ENCODE measurements at regions of chrX and their contacts with region 1.

Region 1: GRCh38 chrX:24241822-24242648 is 71.8 kb downstream of the SUPT20HL2 start:
- DNase-seq: peak in 1 of 2 donors; percentile 11
- ATAC-seq: no peak
- H3K4me3 ChIP-seq: no peak overlapping the region
- H3K27ac ChIP-seq: peak overlapping the region; percentile 43 to 66 (median 54)
- H3K4me1 ChIP-seq: peaks cover 0 to 4% of the 10 kb centered on the region in 2 donors
- H3K27me3 ChIP-seq: no peaks in the 10 kb centered on the region
- CTCF ChIP-seq: peak in 4 of 5 experiments; percentile 13 to 51 (median 27)
- POLR2A ChIP-seq: no peak

Region 2: GRCh38 chrX:23742697-23743622 is 499.1 kb before region 1 on chrX and contains the start of gene ACOT9:
- in situ Hi-C with region 1: no loop called
- intact Hi-C with region 1: no loop called
- DNase-seq: peak; percentile 85 to 96
- ATAC-seq: peak; percentile 91 to 95
- H3K4me3 ChIP-seq: peak within 1 kb of the TSS; percentile 73 to 85 (median 82)
- H3K27ac ChIP-seq: peak within 1 kb of the TSS; percentile 91 to 96 (median 94)
- H3K4me1 ChIP-seq: no peaks in the 10 kb centered on the region
- H3K27me3 ChIP-seq: no peaks in the 10 kb centered on the region
- CTCF ChIP-seq: no peak
- POLR2A ChIP-seq: peak; percentile 78 to 81
- total RNA-seq, gene ACOT9: 12.3 to 21.9 (median 20.6) TPM

Region 3: GRCh38 chrX:24081661-24082264 is 160.3 kb before region 1 on chrX:
- in situ Hi-C with region 1: loop called in 3 of 4 experiments (anchors 10 to 25 kb)
- intact Hi-C with region 1: no loop called
- DNase-seq: peak; percentile 2 to 35
- ATAC-seq: peak in 1 of 2 donors; percentile 49
- H3K4me3 ChIP-seq: no peak overlapping the region
- H3K27ac ChIP-seq: no peak overlapping the region
- H3K4me1 ChIP-seq: no peaks in the 10 kb centered on the region
- H3K27me3 ChIP-seq: no peaks in the 10 kb centered on the region
- CTCF ChIP-seq: peak in 2 of 5 experiments; percentile 16 to 46
- POLR2A ChIP-seq: no peak

Region 4: DNA sequence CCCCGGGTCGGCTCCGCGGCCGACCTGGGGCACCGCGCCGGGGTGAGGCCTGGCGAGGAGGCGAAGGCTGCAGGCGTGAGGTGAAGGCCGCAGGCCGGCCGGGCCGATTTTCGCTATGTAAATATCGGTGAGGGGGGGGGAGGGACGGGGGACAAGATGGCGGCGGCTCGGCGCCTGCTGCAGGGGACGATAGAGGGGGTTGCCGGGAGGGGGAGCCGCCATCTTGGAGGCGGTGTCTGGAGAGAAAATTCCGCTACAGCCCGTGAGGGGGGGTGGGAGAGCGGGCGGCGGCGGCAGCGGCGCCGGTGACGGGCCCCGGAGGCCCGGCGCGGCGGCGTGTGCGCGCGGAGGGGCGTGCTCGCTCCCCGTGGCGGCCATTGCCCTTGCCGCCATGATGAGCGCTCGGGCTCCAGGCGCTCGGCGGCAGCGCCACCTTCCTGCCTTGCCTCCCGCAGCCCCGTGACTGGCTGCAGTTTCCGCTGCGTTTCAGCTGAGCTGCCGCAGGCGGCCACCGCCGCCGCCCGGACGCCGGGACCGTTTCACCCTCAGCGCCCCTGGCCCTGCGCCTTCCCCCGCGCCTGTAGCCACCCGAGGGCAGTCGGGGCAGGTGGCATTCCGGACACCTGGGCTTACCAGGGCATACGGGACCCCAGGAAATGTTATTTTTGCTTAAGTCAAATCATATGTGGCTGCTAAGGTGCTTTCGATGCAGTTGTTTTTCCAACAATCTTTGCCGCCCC is 91.8 kb before region 1 on chrX:
- in situ Hi-C with region 1: no loop called
- intact Hi-C with region 1: loop called (anchors 2 kb)
- DNase-seq: peak; percentile 80 to 83
- ATAC-seq: peak; percentile 79 to 85
- H3K4me3 ChIP-seq: peak overlapping the region; percentile 62 to 85 (median 76)
- H3K27ac ChIP-seq: peak overlapping the region; percentile 93 to 99 (median 95)
- H3K4me1 ChIP-seq: peaks cover 57 to 64% of the 10 kb centered on the region in 2 donors
- H3K27me3 ChIP-seq: no peaks in the 10 kb centered on the region
- CTCF ChIP-seq: peak in 4 of 5 experiments; percentile 59 to 68 (median 61)
- POLR2A ChIP-seq: peak; percentile 51 to 63